Activated CD8-positive, alpha-beta memory T cell treated with anti-CD3 and anti-CD28 coated beads, Interleukin-2, amount 10 ng/mL, durations not matched to agents 7 days and 5 days (primary cell): ENCODE measurements at regions of chr16 and their contacts with region 1.

Region 1: GRCh38 chr16:9270424-9270823 is 179.0 kb downstream of the HAPSTR1 start:
- DNase-seq: no peak
- ATAC-seq: no peak
- H3K4me3 Mint-ChIP-seq: no peak overlapping the region
- H3K27ac Mint-ChIP-seq: no peak overlapping the region
- H3K4me1 Mint-ChIP-seq: no peaks in the 10 kb centered on the region
- H3K27me3 Mint-ChIP-seq: no peaks in the 10 kb centered on the region

Region 2: GRCh38 chr16:9258423-9259051 is 11.9 kb before region 1 on chr16:
- CTCF ChIA-PET with region 1: interaction called, 15 read pairs
- DNase-seq: peak; percentile 42
- ATAC-seq: no peak
- H3K4me3 Mint-ChIP-seq: no peak overlapping the region
- H3K27ac Mint-ChIP-seq: no peak overlapping the region
- H3K4me1 Mint-ChIP-seq: no peaks in the 10 kb centered on the region
- H3K27me3 Mint-ChIP-seq: peaks cover 2% of the 10 kb centered on the region